A549 (cell line): ENCODE measurements at regions of chr16 and their contacts with region 1.

Region 1: DNA sequence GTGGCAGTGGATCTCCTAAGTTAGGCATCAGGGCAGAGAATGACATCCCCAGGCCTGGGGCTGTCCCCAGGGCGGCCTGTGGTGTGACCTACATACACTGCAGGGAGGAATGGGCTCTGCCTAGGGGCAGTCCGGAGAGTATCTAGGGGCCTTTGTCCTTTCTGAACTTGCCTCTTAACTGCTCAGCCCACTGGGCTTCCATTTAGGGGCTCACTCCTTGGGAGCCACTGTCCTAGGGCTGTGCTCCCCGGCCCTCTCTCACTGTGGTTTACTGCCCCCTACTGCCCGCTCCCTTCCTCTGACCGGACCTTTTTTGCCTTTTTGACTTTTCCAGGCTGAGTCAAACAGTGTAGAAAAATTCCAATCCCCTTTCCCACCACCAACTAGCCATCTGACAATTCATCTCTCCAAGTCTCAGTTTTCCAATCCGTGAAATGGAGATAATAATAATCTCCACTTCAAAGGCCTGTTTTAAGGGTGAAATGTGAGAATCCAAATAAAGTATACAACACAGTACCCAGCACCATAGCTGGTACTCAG is 66.8 kb downstream of the DNAH3 start:
- DNase-seq: peak; percentile 25 to 52
- ATAC-seq: peak; percentile 93 to 97
- H3K4me3 ChIP-seq: no peak overlapping the region
- H3K27ac ChIP-seq: 0 out of 6 replicates have a peak overlapping the region, but pooled peaks of 1 of the 2 experiments have one; percentile 41
- H3K4me1 ChIP-seq: no peaks in the 10 kb centered on the region
- CTCF ChIP-seq: peak; percentile 75
- EP300 ChIP-seq: no peak
- POLR2A ChIP-seq: no peak
- RAD21 ChIP-seq: peak; percentile 88 to 90

Region 2: DNA sequence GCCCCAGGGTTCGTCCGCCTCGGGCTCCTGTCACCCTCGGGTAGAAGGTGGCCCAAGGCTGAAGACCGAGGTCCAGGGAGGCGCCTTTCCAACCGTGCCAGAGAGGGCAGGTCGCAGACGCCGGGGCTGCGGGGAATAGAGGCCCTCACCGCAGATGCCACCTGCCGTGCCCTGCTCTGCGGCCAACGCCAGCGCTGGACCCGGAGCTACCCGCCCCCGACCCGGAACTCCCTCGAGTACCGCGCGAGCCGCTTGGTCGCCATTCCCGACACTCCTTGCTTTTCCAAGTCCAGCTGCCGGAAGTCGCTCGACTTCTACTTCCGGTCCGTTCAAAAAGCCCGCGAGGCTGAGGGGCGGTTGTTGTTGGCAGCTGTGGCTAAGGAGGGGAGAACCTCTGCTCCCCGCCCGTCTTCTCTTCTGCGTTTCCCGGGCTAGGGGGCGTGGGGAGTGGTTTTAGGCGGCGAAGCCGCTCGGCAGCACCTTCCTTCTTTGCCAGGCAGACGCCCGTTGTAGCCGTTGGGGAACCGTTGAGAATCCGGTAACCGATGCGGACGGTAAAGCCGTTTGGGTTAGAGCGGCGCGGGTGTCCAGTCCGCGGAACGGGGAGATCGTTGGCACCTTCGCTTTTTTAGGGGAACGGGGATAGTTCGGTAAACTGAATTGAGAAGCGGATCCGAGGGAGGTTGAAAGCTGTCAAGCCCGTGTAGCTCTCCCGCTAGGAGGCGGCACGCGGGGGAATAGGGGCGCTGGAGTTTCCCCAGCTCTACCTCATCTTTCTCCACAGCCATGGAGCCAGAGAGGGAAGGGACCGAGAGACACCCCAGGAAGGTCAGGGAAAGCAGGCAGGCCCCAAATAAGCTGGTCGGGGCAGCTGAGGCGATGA is 277.4 kb before region 1 on chr16 and contains the starts of genes ERI2 and REXO5:
- CTCF ChIA-PET with region 1: interaction called, 12 read pairs
- POLR2A ChIA-PET with region 1: no interaction called
- DNase-seq: peak; percentile 89 to 96
- ATAC-seq: peak; percentile 96 to 97
- H3K4me3 ChIP-seq: peak within 1 kb of the TSS; percentile 75
- H3K27ac ChIP-seq: peak within 1 kb of the TSS; percentile 84 to 94
- H3K4me1 ChIP-seq: peaks cover 7% of the 10 kb centered on the region; the same call in 1 of the 3 replicates
- CTCF ChIP-seq: peak; percentile 47
- EP300 ChIP-seq: no peak
- POLR2A ChIP-seq: peak; percentile 76
- RAD21 ChIP-seq: peak in 1 of 2 experiments; percentile 20; a peak in 2 of 5 replicates
- polyA plus RNA-seq, gene ERI2: 21.0 and 25.1 TPM in 2 replicates
- polyA plus RNA-seq, gene REXO5: 5.1 and 5.2 TPM in 2 replicates

Region 3: GRCh38 chr16:21001262-21001661 is 82.5 kb before region 1 on chr16:
- CTCF ChIA-PET with region 1: no interaction called
- POLR2A ChIA-PET with region 1: no interaction called
- DNase-seq: peak; percentile 18 to 47
- ATAC-seq: peak; percentile 47 to 82; a peak in 5 of 6 replicates
- H3K4me3 ChIP-seq: no peak overlapping the region
- H3K27ac ChIP-seq: no peak overlapping the region
- H3K4me1 ChIP-seq: no peaks in the 10 kb centered on the region
- CTCF ChIP-seq: peak; percentile 37
- EP300 ChIP-seq: no peak
- POLR2A ChIP-seq: no peak
- RAD21 ChIP-seq: peak in 1 of 2 experiments; percentile 35; a peak in 2 of 5 replicates

Region 4: GRCh38 chr16:21053590-21053989 is 30.2 kb before region 1 on chr16:
- CTCF ChIA-PET with region 1: interaction called, 10 read pairs
- POLR2A ChIA-PET with region 1: no interaction called
- DNase-seq: no peak
- ATAC-seq: no peak
- H3K4me3 ChIP-seq: no peak overlapping the region
- H3K27ac ChIP-seq: no peak overlapping the region
- H3K4me1 ChIP-seq: no peaks in the 10 kb centered on the region
- CTCF ChIP-seq: no peak
- EP300 ChIP-seq: no peak
- POLR2A ChIP-seq: no peak
- RAD21 ChIP-seq: no peak

Region 5: GRCh38 chr16:21064203-21064602 is 19.6 kb before region 1 on chr16:
- CTCF ChIA-PET with region 1: no interaction called
- POLR2A ChIA-PET with region 1: no interaction called
- DNase-seq: no peak
- ATAC-seq: no peak
- H3K4me3 ChIP-seq: no peak overlapping the region
- H3K27ac ChIP-seq: no peak overlapping the region
- H3K4me1 ChIP-seq: no peaks in the 10 kb centered on the region
- CTCF ChIP-seq: no peak
- EP300 ChIP-seq: no peak
- POLR2A ChIP-seq: no peak
- RAD21 ChIP-seq: no peak